Ascending aorta (tissue), 2 donors: ENCODE measurements at regions of chr1 and their contacts with region 1.

Region 1: GRCh38 chr1:235898116-235898515 is 31.4 kb upstream of the LYST start:
- DNase-seq: no peak
- H3K4me3 ChIP-seq: no peak overlapping the region
- H3K27ac ChIP-seq: no peak overlapping the region
- H3K4me1 ChIP-seq: peaks cover 0 to 1% of the 10 kb centered on the region in 2 donors
- H3K27me3 ChIP-seq: no peaks in the 10 kb centered on the region
- CTCF ChIP-seq: no peak

Region 2: DNA sequence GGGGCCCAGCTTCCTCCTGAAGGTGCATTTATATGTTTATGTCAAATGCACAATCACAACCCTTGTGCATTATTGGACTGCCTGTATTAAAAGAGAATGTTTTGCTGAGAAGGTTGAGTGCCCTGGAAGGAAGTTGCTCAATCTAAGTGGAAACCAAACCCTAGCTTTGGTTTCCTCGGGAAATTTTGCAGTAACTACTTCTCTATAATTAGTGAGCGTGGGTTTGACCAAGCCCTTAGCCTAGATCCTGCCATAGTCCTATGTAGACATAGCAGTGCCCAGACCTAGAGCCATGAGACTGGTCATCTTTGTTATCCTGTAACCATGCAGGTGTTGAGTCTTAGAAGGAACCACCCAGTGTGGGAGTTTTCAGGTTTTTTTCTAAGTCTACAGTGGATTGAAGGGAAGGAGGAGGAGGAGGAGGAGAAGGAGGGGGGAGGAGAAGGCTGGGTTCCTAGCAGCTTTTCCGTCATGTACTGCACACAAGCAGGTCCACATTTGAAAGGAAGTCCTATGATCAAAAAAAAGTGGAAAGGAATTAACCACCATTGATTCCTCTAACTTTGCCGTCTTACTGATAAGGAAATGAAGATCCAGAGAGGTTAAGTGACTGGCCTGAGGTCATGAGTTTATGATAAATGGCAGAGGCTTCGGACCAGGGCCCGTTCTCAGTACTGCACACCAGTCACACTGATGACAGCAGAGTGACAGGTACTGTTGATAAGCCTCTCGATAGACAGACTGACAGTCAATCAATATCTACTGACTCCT is 40.8 kb after region 1 on chr1:
- intact Hi-C with region 1: loop called (anchors 5 kb)
- DNase-seq: no peak
- H3K4me3 ChIP-seq: no peak overlapping the region
- H3K27ac ChIP-seq: peak overlapping the region in 1 of 2 donors; percentile 8
- H3K4me1 ChIP-seq: no peaks in the 10 kb centered on the region
- H3K27me3 ChIP-seq: no peaks in the 10 kb centered on the region
- CTCF ChIP-seq: no peak